ENCODE measurements at regions of chr1 and their contacts with region 1.

Region 1: GRCh38 chr1:40078512-40079333 is 18.3 kb downstream of the PPT1 start:
- DNase-seq: no peak
- H3K4me3 ChIP-seq: no peak overlapping the region
- CTCF ChIP-seq: peak; percentile 79

Region 2: DNA sequence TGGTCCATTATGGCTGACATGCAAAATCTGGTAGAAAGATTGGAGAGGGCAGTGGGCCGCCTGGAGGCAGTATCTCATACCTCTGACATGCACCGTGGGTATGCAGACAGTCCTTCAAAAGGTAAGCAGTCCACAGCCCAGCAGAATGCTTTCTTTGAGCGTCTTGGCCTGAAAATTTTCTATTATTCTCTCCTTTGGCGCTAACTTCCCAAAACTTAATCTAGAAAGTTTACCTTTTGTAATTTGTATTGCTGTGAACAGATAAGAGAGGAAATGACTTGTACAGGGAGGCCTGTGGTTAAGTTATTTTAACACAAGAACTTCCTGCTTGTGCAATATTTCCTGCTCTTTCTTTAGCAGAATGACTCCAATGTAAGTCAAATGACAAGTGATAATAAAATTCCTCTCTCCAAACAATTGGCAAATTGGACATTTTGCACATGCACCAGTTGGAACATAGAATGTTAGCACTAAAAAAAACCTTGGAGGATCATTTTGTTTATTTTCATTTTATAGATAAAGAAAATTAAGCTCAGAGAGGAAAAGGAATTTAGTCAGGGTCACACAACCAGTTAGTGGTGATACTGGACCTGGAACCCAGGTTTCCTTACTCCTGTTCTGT is 19.3 kb before region 1 on chr1:
- CTCF ChIA-PET with region 1: interaction called, 56 read pairs
- POLR2A ChIA-PET with region 1: no interaction called
- DNase-seq: no peak
- H3K4me3 ChIP-seq: no peak overlapping the region
- CTCF ChIP-seq: no peak

Region 3: GRCh38 chr1:40092706-40093639 is 14.2 kb after region 1 on chr1:
- CTCF ChIA-PET with region 1: interaction called, 75 read pairs
- POLR2A ChIA-PET with region 1: no interaction called
- DNase-seq: no peak
- H3K4me3 ChIP-seq: no peak overlapping the region
- CTCF ChIP-seq: no peak

Measured in AG04449 (cell line).